GM12878 (cell line): ENCODE measurements at regions of chr13 and their contacts with region 1.

Region 1: DNA sequence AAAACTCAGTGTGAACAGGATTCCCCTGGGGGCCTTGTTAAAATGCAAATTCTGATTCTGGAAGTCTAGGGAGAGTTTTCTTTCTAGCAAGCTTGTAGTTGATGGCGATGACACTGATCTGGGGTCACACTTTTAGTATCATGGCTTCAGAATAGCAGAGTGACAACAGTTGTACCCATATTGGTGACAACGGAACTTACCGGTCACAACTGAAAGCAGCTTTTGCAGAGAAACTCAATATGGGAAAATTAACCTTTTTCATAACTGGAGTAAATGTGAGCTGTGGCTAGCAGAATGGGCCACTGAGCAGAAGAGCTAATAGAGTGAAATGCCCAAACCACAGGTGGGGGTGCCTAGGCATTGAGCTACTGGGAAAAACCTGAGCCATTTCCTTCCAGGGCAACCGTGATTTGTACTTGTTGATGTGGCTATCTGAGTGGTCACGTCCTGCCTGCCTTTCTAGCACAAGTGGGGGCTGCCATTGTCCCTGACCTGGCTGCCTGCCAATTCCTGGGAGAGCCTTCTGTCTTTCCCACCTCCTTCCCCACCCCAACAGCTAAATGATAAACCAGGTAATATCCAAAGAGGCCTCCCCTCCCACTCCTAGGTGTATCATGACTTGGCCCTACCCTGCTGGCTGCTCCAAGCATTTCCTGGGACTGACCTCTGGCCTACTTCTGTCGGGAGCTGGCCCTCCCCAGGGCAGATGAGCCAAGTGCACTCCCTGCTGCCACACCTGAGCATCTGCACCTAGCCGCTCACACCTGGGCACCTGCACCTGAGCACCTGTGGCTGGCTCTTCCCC is 1.7 kb upstream of the SLC10A2 start:
- DNase-seq: peak; percentile 72
- ATAC-seq: peak; percentile 86
- H3K4me3 ChIP-seq: no peak overlapping the region
- H3K27ac ChIP-seq: peak overlapping the region; percentile 13
- H3K4me1 ChIP-seq: peaks cover 11% of the 10 kb centered on the region
- H3K27me3 ChIP-seq: no peaks in the 10 kb centered on the region
- CTCF ChIP-seq: no peak
- EP300 ChIP-seq: no peak; a peak in 1 of 4 replicates
- POLR2A ChIP-seq: no peak
- RAD21 ChIP-seq: peak; percentile 17; the same call in 1 of the 2 replicates

Region 2: DNA sequence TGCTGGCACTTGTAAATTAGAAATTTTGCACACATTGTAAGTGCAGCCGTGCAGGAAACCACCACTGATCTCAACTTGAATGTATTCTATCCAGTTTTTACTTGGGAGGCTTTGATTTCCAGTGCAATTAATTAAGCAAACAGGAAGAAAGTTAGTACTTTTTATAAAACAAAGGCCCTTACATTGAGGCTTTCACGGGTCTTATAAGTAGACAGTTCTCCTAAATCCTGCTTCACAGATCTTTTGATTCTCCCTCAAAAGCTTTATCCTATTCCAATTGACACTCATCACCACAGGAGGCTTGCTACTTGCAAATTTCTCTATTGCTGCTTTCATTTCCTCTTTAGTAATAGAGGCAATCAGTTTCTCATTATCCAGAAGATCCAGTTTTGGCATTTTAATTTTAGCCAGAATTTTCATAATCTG is 132.0 kb before region 1 on chr13:
- CTCF ChIA-PET with region 1: no interaction called
- POLR2A ChIA-PET with region 1: no interaction called
- RAD21 ChIA-PET with region 1: no interaction called
- SMC1A ChIA-PET with region 1: no interaction called
- in situ Hi-C with region 1: no loop called
- intact Hi-C with region 1: loop called (anchors 10 kb)
- DNase-seq: peak; percentile 20
- ATAC-seq: peak; percentile 69
- H3K4me3 ChIP-seq: no peak overlapping the region
- H3K27ac ChIP-seq: no peak overlapping the region
- H3K4me1 ChIP-seq: peaks cover 10% of the 10 kb centered on the region
- H3K27me3 ChIP-seq: no peaks in the 10 kb centered on the region
- CTCF ChIP-seq: no peak
- EP300 ChIP-seq: 0 out of 4 replicates have a peak, but pooled peaks of 1 of the 2 experiments have one; percentile 6
- POLR2A ChIP-seq: no peak
- RAD21 ChIP-seq: no peak

Region 3: DNA sequence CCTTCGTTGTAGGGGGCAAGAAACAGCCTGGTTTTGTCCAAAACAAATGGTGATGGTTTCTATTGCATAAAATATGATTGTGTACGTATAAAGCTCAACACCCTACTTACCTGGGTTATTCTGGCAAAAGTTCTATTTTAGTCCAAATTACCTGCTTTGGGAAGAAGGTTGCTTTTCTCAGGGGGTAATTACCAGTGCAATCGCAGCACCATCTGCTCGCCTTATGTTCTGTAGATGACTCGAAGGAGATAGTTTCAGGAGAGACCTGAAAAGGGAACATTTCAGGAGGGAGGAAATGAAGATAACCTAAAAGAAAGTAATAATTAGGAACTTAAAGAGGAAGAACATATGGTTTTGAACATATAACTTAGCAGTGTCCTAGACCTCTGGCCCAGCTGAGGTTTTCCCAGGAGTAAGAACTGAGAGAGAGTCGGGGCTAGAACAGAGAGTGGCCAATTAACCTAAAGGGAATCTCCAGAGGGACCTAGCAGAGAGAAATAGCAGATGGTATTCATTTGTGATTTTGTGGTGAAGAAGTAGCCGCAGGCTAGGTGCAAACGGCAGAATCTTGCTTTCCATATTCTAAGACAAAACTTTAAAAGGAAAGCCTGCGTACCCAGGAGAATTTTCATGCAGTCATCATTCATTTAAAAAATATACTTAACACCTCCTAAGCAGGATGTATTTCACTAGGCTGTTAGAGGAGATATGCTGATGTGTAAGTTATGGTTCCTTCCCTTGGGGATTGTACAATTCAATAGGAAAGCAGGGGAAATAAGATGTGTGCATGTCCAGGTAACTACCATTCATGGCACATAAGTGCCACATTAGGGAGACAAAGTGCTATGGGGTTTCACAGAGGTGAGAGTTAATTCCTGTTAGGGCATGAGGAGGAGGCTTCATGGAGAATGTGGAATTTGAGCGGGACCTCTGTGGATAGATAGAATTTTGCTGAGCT is 111.3 kb after region 1 on chr13:
- CTCF ChIA-PET with region 1: no interaction called
- POLR2A ChIA-PET with region 1: no interaction called
- RAD21 ChIA-PET with region 1: no interaction called
- SMC1A ChIA-PET with region 1: interaction called, 4 read pairs
- in situ Hi-C with region 1: no loop called
- intact Hi-C with region 1: loop called (anchors 2 kb)
- DNase-seq: peak; percentile 46
- ATAC-seq: peak; percentile 87
- H3K4me3 ChIP-seq: no peak overlapping the region
- H3K27ac ChIP-seq: no peak overlapping the region
- H3K4me1 ChIP-seq: peaks cover 10% of the 10 kb centered on the region
- H3K27me3 ChIP-seq: no peaks in the 10 kb centered on the region
- CTCF ChIP-seq: no peak
- EP300 ChIP-seq: peak in 1 of 2 experiments; percentile 60; a peak in 3 of 4 replicates
- POLR2A ChIP-seq: no peak
- RAD21 ChIP-seq: no peak

Region 4: GRCh38 chr13:103229674-103230073 is 161.7 kb after region 1 on chr13:
- CTCF ChIA-PET with region 1: no interaction called
- POLR2A ChIA-PET with region 1: no interaction called
- RAD21 ChIA-PET with region 1: no interaction called
- SMC1A ChIA-PET with region 1: no interaction called
- in situ Hi-C with region 1: no loop called
- intact Hi-C with region 1: no loop called
- DNase-seq: no peak
- ATAC-seq: no peak
- H3K4me3 ChIP-seq: no peak overlapping the region
- H3K27ac ChIP-seq: no peak overlapping the region
- H3K4me1 ChIP-seq: no peaks in the 10 kb centered on the region
- H3K27me3 ChIP-seq: no peaks in the 10 kb centered on the region
- CTCF ChIP-seq: no peak
- EP300 ChIP-seq: no peak
- POLR2A ChIP-seq: no peak
- RAD21 ChIP-seq: no peak